ENCODE measurements at regions of chr4 and their contacts with region 1.

Region 1: DNA sequence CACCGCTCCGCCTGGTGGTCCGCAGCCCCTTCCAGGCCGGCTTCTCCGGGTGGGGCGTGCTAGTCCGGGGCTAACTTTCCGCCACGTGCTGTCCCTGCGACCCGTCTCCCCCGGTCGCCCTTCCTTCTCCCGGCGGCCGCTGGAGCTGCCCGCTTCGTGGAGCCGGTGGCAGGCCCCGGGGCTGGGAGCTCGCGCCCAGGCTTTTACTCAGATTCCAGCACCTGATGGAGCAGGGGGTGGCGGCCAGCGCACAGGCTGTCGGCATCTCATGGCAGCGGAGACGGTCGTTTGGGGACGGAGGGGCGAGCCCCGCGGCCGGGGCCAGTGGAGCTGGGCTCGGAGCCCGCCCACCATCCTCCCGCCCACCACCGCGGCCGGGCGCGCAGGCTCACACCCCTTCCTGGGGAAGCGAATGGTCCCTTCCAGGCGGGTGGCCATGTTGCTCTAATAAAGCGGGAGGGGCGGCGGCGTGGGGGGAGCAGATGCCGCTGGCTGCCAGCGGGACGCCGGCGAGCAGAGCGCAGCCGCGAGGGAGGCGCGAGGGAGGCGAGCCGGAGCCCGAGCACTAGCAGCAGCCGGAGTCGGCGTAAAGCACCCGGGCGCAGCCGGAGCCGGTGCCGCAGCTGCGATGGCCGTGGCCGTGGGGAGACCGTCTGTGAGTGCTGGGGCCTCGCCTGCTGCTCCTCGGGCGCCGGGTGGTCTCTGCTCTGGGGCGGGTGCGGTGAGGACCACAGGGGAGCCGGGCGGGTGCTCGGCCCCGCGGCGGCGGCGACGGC is at the start of gene SEPTIN11:
- DNase-seq: peak; percentile 92
- H3K4me3 ChIP-seq: peak within 1 kb of the TSS; percentile 61 to 80 (median 70)
- H3K27ac ChIP-seq: peak within 1 kb of the TSS; percentile 80
- H3K4me1 ChIP-seq: peaks cover 19% of the 10 kb centered on the region
- H3K27me3 ChIP-seq: no peaks in the 10 kb centered on the region
- CTCF ChIP-seq: no peak
- total RNA-seq, gene SEPTIN11: 156 to 188 TPM

Region 2: GRCh38 chr4:76758290-76758882 is 191.1 kb before region 1 on chr4:
- CTCF ChIA-PET with region 1: no interaction called
- dilution Hi-C with region 1: no loop called
- in situ Hi-C with region 1: no loop called
- intact Hi-C with region 1: loop called (anchors 10 kb)
- DNase-seq: peak; percentile 55
- H3K4me3 ChIP-seq: no peak overlapping the region
- H3K27ac ChIP-seq: no peak overlapping the region
- H3K4me1 ChIP-seq: peaks cover 16% of the 10 kb centered on the region
- H3K27me3 ChIP-seq: no peaks in the 10 kb centered on the region
- CTCF ChIP-seq: peak; percentile 73 to 91

Region 3: DNA sequence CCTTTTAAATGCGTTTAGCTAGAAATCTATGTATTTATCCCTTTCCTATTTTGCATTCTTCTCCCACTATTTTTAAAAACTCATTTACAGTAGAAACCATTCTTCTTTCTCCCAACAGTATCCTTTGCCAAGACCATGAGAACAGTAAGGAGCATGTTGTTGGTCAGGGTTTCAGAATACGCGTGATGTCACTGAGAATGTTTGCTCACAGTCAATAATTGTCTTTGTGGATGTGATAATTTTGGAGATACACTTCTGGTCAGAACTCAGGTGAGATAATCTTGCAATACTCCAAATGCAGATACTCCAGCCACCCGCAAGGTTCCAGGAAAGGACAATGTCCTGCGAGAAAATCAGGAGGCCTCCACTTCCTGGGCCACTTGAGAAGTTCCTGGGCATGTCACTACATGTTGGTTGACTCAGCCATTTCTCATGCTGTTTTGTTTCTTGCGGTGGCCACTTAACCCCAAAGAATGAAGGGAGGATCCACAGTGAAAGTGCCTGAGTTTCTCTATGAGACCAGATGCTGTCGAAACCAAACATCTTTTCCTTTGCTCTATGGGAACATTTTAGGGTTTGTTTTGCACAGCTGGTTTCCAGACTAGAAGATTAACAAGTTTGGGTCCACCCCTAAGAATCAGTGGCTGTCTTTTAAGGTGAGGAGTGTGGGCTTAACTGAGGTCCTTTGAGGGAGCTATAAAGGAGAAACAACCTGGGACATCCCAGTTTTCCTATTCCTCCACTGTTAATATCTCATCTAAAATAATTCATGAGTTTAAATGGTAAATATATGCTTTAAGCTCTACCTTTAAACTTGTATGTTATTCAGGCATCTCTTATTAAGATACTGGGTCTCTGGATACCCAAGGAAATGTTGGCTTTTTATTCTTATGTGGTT is 167.5 kb before region 1 on chr4:
- CTCF ChIA-PET with region 1: no interaction called
- dilution Hi-C with region 1: no loop called
- in situ Hi-C with region 1: no loop called
- intact Hi-C with region 1: loop called (anchors 1 kb)
- DNase-seq: peak; percentile 100
- H3K4me3 ChIP-seq: peak overlapping the region; percentile 23 to 52 (median 32)
- H3K27ac ChIP-seq: peak overlapping the region; percentile 100
- H3K4me1 ChIP-seq: peaks cover 33% of the 10 kb centered on the region
- H3K27me3 ChIP-seq: no peaks in the 10 kb centered on the region
- CTCF ChIP-seq: no peak

Region 4: DNA sequence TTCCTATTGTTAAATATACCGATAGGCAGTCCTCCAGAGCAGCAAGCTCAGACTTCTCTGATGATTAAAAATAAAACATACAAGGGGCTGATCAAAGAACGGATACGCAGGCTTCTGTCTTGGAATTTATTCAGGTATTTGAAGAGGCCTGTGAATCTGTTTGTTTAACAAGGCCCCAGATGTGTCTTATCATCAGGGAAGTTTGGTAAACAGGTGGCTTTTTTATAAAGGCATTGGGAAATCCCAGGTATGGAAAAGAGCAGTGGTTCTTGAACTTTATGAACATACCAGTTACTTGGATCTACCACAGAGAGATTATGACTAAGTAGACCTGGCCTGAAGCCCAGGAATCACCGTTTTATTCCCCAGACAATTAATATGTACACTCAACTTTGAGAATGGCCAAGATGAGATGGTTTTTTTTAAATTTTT is 99.4 kb before region 1 on chr4:
- CTCF ChIA-PET with region 1: no interaction called
- dilution Hi-C with region 1: no loop called
- in situ Hi-C with region 1: no loop called
- intact Hi-C with region 1: loop called (anchors 2 kb)
- DNase-seq: peak; percentile 97
- H3K4me3 ChIP-seq: no peak overlapping the region
- H3K27ac ChIP-seq: no peak overlapping the region
- H3K4me1 ChIP-seq: peaks cover 7% of the 10 kb centered on the region
- H3K27me3 ChIP-seq: no peaks in the 10 kb centered on the region
- CTCF ChIP-seq: no peak

Region 5: GRCh38 chr4:76896731-76897535 is 52.5 kb before region 1 on chr4:
- CTCF ChIA-PET with region 1: no interaction called
- dilution Hi-C with region 1: no loop called
- in situ Hi-C with region 1: no loop called
- intact Hi-C with region 1: loop called (anchors 1 kb)
- DNase-seq: peak; percentile 48
- H3K4me3 ChIP-seq: peak overlapping the region; percentile 63 to 74 (median 70)
- H3K27ac ChIP-seq: no peak overlapping the region
- H3K4me1 ChIP-seq: peaks cover 33% of the 10 kb centered on the region
- H3K27me3 ChIP-seq: no peaks in the 10 kb centered on the region
- CTCF ChIP-seq: no peak

Region 6: DNA sequence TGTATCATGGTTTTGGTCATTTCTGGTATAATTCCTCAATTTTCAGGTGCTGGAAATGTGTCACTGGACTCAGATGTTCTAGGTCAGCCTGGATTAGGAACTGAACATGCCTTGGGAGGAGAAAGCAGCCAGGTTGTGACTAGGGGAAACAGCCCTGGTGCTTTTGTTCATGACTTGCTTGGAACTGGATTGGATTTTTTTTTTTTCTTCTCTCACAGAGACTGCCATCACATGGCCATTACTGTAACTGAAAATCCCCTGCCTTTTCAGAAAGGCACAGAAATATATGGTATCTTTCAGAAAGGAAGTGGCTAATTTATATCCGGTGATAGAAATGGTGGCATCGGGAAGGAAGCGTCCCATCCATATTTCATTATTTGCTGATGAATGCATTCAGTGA is 34.7 kb after region 1 on chr4:
- CTCF ChIA-PET with region 1: no interaction called
- dilution Hi-C with region 1: no loop called
- in situ Hi-C with region 1: no loop called
- intact Hi-C with region 1: loop called (anchors 2 kb)
- DNase-seq: peak; percentile 24
- H3K4me3 ChIP-seq: no peak overlapping the region
- H3K27ac ChIP-seq: peak overlapping the region; percentile 6
- H3K4me1 ChIP-seq: peaks cover 21% of the 10 kb centered on the region
- H3K27me3 ChIP-seq: no peaks in the 10 kb centered on the region
- CTCF ChIP-seq: peak; percentile 16 to 45

Region 7: DNA sequence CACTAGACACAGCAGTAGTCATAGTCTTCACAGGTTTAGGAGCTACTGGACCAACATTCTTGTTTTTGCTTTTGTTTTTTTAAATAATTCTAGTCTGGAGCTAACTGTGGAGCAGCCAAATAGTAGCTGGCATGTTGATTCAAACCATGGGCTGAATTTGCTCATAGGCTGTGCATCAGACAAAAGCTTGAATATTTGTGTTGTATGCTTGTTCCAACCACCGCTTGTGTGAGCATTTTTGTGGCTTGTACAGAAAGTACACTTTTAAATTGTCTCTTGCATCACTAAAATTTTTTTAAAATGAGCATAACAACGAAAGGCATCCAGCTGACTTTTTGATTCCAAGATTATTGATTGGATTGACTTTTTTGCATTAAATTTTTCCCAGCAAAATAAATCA is 86.7 kb after region 1 on chr4:
- CTCF ChIA-PET with region 1: no interaction called
- dilution Hi-C with region 1: no loop called
- in situ Hi-C with region 1: no loop called
- intact Hi-C with region 1: loop called (anchors 2 kb)
- DNase-seq: peak; percentile 79
- H3K4me3 ChIP-seq: no peak overlapping the region
- H3K27ac ChIP-seq: peak overlapping the region; percentile 72
- H3K4me1 ChIP-seq: peaks cover 31% of the 10 kb centered on the region
- H3K27me3 ChIP-seq: no peaks in the 10 kb centered on the region
- CTCF ChIP-seq: no peak